Gastrocnemius medialis (tissue), 4 donors: ENCODE measurements at regions of chr10 and their contacts with region 1.

Region 1: DNA sequence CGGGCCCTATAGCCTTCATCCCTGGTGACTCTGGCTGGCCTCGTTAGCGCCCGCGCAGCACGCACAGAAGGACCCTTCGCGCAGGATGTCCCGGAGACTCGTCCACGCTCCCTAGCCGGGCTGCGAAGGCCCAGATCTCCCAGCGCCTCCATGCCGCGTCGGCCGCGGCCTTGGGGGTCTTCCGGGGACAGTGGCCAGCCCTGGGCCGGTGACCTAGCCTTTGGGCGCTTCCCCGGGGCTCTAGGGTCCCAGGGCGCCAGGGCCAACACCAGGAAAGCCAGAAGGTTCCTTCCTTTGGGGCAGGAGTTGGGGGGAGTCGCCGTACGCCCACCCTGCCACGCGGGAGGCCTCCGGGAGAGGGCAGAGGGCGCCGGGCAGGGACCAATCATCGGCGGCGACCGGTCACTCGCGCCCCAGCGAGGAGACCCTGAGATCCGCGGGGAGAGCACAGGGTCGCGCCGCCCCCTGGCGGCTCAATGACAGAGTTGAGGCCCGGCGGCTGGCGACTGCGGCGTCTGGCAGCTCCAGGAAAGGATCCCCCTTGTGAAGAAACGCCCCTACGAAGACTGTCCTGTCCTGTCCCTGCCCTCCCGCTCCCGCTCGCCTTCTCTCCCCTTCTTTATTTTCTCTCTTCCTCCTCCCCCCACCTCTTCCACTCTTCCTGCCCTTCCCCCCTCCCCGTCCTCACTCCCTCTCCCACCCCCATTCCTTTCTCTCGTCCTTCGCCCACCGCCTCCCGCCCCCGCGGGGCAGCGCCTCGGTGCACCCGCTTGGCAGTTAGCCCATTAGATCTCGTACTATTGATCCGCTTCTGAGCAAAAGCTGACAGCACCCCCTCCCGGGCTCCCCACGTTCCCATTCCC is 62.3 kb upstream of the LBX1 start:
- DNase-seq: peak; percentile 28 to 56
- ATAC-seq: peak; percentile 63 to 83
- H3K4me3 ChIP-seq: peak overlapping the region; percentile 71 to 95 (median 76)
- H3K27ac ChIP-seq: peak overlapping the region; percentile 76 to 84 (median 82)
- H3K4me1 ChIP-seq: peaks cover 0 to 5% of the 10 kb centered on the region in 2 donors
- H3K27me3 ChIP-seq: no peaks in the 10 kb centered on the region
- CTCF ChIP-seq: peak; percentile 60 to 91 (median 81)
- POLR2A ChIP-seq: no peak

Region 2: DNA sequence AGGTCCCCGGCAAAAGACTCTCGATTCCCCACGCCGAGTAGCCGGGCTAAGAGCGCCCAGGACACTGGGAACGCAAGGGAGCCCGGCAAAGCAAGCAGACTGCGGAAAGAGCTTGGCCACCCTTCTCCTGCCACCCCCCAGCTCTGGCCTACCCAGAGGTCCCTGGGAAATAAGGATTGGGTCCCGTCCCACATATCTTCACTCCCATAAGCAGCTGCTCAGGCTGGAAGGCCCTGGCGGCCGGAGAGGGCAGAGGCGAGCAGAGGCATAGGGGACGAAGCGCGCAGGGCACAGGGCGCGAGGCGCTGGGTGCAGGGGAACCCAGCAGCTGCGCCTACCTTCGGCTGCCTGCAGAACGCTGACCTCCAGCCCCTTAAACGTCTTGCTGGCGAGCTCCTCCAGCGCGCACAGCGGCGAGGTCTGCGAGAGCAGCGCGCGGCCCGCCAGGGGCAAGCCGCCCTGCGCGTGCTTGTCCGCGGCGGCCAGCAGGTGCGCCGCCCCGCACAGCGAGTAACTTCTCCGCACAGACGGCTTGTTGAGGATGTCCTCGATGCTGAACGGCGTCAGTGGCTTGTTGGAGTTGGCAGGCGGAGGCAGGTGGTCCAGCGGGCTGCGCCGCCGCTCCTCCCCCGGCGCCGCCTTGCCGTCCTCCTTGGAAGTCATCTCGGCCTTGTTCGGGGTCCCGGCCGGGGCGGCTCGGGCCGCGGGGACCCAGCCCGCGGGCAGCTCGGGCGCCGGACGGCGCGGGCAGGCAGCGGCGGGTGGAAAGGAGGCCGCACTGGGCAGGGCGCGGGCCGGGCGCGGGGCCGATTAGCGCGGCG is 63.2 kb before region 1 on chr10:
- in situ Hi-C with region 1: no loop called
- intact Hi-C with region 1: loop called (anchors 5 kb)
- DNase-seq: peak in 1 of 2 donors; percentile 73
- ATAC-seq: peak; percentile 40 to 41
- H3K4me3 ChIP-seq: peak overlapping the region; percentile 54 to 87 (median 68)
- H3K27ac ChIP-seq: peak overlapping the region; percentile 92 to 96 (median 96)
- H3K4me1 ChIP-seq: peaks cover 24 to 57% of the 10 kb centered on the region in 2 donors
- H3K27me3 ChIP-seq: peaks cover 20 to 27% (median 23%) of the 10 kb centered on the region in 3 donors
- CTCF ChIP-seq: peak in 4 of 5 experiments; percentile 21 to 50 (median 46)
- POLR2A ChIP-seq: peak; percentile 18 to 48

Region 3: DNA sequence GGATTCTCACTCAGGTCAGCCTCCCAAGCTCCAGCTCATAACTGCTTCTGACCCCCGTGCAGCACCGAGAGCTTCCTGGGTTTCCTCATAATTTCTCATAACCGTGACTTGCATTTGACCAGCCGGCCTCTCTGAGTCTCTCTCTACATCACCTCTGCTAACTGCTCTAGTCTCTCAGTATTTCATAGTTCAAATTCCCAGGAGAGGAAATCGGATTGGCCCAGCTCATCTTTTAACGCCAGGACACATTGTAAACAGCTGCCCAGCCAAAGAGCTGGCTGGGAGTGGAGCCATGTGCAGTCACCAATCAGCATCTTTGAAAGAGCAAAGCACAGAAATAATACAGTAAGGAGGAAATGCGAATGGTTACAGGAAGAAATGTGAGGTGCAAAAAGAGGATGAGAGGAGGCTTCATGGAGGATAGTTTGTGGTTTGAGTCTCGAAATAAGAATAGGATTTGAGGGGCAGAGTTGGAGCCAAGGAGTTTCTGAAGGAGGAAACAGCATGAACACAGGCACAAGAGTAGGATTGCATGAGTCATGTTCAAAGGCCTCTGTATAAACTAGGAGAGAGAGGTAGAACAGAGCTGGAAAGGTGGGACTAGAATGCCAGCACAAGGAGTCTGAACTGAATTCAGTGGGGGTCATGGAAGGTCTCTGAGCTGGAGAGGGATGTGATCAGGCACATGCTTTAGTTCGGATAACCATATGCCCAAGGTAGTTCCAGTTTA is 47.1 kb before region 1 on chr10:
- in situ Hi-C with region 1: no loop called
- intact Hi-C with region 1: loop called (anchors 5 kb)
- DNase-seq: peak in 1 of 2 donors; percentile 53
- ATAC-seq: peak; percentile 67 to 83
- H3K4me3 ChIP-seq: no peak overlapping the region
- H3K27ac ChIP-seq: peak overlapping the region; percentile 75 to 90 (median 78)
- H3K4me1 ChIP-seq: peaks cover 27 to 34% of the 10 kb centered on the region in 2 donors
- H3K27me3 ChIP-seq: peaks cover 0 to 1% (median 0%) of the 10 kb centered on the region in 3 donors
- CTCF ChIP-seq: no peak
- POLR2A ChIP-seq: no peak

Region 4: DNA sequence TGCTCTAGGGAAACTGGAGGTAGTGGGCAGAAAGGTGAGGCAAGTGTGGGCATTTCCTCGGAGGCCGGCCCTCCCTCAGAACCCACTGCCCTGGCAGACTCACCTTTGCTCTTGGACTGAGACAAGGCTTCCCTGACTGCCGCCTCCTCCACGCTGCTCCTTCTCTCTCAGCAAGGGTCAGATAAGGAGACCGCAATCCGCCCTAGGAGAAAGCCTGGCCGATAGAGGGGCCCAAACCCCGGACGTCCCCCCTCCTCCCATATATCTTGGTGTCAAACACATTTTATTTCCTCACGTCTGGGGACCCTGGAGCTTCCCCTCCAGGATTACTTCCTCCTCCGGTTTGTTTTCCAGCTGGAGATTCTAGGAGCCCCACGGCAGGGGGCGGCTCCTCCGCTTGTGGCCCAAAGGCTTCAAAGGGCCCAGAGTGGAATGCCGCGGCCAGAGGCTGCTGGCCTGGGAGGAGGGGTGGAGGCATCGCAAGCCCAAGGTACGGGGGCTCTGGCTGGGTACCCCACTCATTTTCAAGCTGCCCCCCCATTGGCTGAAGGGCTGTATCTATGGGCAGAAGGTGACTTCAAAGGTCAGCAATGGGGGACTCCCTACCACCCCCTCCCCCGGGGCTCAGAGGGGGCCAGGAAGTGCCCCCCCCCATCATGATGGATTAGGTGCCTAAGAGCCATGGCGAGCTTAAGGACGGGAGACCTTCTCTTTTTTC is 30.6 kb before region 1 on chr10:
- in situ Hi-C with region 1: no loop called
- intact Hi-C with region 1: no loop called
- DNase-seq: no peak
- ATAC-seq: no peak
- H3K4me3 ChIP-seq: no peak overlapping the region
- H3K27ac ChIP-seq: no peak overlapping the region
- H3K4me1 ChIP-seq: no peaks in the 10 kb centered on the region
- H3K27me3 ChIP-seq: no peaks in the 10 kb centered on the region
- CTCF ChIP-seq: no peak
- POLR2A ChIP-seq: no peak

Region 5: DNA sequence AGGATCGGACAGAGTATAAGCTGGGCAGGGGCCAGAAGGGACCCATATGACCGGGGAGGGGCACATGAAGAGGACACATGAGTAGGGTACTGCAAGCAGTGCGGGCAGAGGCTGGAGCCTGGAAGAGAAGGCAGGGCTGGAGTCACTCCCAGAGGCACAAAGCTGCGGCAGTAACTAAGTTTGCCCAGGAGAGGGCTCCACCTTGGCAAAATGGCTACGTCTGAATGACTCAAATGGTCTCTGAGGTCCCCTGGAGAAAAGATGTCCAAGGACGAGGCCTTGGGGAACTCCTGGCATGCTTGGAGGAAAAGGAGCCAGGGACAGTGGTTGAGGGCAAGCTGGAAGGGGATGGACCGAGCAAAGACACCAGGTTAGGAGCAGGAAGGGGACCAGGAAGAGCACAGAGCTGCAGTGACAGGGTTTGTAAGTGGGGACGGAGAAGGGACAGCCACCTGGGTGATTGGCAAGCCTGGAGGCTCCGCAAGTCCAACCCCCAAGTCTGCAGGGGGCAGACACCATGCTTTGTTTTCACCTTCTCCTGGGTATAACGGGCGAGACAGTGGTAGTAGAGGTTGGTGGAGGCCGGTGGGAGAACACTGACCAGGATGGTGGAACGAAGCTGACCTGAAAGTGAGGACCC is 19.2 kb before region 1 on chr10:
- in situ Hi-C with region 1: no loop called
- intact Hi-C with region 1: loop called (anchors 2 kb)
- DNase-seq: peak in 1 of 2 donors; percentile 48
- ATAC-seq: peak; percentile 73 to 92
- H3K4me3 ChIP-seq: no peak overlapping the region
- H3K27ac ChIP-seq: no peak overlapping the region
- H3K4me1 ChIP-seq: no peaks in the 10 kb centered on the region
- H3K27me3 ChIP-seq: no peaks in the 10 kb centered on the region
- CTCF ChIP-seq: peak; percentile 50 to 77 (median 71)
- POLR2A ChIP-seq: no peak

Region 6: DNA sequence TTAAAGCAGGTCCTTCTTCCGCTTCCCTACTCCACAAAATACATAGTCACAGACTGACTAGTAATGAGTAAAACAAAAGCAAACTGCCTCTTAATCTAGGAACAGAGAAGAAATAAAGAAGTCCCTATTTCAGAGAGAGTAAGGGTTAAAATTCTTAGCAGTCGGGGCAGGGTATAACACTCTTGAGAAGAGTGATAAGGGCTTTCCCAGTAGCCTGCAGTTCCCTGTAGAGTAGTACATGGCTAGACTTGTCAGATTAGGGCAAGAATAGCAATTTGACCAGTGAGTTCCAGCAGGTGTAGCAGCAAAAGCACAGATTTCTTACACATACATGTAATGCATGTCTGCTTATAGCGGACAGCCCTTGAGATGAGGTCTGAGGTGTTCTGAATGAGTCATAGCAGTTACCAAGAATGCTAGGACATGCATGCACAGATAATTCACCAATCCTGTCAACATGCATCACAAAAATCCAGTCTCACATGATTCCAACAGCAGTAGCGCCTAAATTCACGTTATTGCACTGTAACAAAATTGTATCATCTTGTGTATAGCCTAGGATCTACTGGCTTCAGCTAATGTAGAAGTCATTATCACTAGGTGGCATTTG is 103.1 kb after region 1 on chr10:
- in situ Hi-C with region 1: no loop called
- intact Hi-C with region 1: no loop called
- DNase-seq: no peak
- ATAC-seq: no peak
- H3K4me3 ChIP-seq: no peak overlapping the region
- H3K27ac ChIP-seq: no peak overlapping the region
- H3K4me1 ChIP-seq: peaks cover 6 to 18% of the 10 kb centered on the region in 2 donors
- H3K27me3 ChIP-seq: no peaks in the 10 kb centered on the region
- CTCF ChIP-seq: no peak
- POLR2A ChIP-seq: no peak